K562 (cell line): ENCODE measurements at regions of chr7 and their contacts with region 1.

Region 1: DNA sequence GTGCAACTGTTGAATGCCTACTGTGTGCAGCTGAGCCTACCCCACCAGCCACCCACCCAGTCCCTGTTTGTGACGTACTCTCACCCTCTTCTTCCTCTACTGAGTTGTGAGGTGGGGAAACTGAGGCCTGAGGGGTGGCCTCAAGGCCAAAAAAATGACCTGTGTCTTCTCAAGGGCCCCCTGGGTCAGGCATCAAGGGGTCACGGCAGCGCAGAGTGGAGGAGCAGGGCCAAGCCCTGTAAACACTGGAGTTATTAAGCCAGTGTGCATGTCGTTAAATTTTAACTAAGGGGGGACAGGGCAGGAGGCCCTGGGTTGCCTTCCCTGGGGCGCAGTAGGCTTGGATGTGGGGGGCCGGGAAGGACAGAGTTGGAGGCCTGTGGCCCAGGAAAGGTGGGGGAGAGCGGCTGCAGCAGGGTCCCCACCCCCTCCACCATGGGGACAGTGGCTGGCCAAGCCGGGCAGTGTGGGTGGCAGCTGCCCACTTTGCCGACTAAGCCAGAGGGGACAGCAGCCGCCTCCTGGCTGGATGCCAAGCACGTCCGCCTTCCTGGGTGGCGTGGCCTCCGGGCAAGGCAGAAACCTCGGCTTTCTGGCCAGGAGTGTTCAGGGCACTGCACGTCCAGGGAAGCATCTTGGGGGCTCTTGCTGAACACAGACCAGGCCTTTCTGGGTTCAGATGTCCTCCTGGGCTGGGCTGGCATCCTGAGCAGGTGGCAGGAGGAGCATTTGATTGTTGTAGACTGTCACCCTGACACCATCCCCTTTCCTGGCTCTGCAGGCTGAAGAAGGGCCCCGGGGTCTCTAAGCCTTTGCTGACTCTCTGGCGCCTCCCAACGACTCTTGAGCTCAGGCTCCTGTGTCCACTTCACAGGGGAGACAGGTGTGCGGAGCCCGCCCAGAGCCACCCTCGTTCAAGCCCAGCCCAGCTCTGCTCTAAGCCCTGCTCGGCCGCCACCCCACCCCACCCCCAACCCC is 1.9 kb downstream of the SLC29A4 start:
- DNase-seq: peak; percentile 36 to 70 (median 48)
- ATAC-seq: peak; percentile 82
- H3K4me3 ChIP-seq: no peak overlapping the region
- H3K27ac ChIP-seq: no peak overlapping the region
- H3K4me1 ChIP-seq: peaks cover 0 to 22% of the 10 kb centered on the region in 2 experiments; a peak in 2 of 5 replicates
- H3K27me3 ChIP-seq: peaks cover under 1 to 9% of the 10 kb centered on the region in 2 experiments; a peak in 3 of 5 replicates
- CTCF ChIP-seq: peak; percentile 56 to 60 (median 56)
- EP300 ChIP-seq: no peak
- POLR2A ChIP-seq: no peak
- RAD21 ChIP-seq: peak in 1 of 2 experiments; percentile 38; a peak in 2 of 4 replicates

Region 2: DNA sequence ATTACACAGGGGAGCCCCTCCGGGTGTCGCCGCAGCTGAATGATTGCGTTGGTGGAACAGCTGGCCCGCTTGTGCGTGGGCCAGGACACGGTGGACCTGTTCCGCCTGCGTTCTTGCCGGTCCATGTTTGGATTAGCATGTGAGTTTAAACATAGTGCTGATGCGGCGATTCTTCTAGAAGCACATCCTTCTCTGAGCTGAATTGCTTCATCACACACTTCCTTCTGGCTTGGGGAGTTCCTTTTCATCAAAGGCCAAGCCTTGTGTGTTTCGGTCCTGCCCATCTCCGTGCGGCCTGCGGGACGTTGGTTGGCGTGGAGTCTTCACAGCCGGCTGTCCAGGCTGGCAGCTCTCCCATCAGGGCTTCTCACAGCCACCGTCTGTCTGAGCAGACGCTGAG is 47.3 kb before region 1 on chr7:
- CTCF ChIA-PET with region 1: interaction called, 4 read pairs
- POLR2A ChIA-PET with region 1: no interaction called
- in situ Hi-C with region 1: no loop called
- intact Hi-C with region 1: loop called (anchors 1 kb)
- DNase-seq: no peak
- ATAC-seq: no peak
- H3K4me3 ChIP-seq: no peak overlapping the region
- H3K27ac ChIP-seq: no peak overlapping the region
- H3K4me1 ChIP-seq: peaks cover 6 to 14% of the 10 kb centered on the region in 2 experiments; a peak in 3 of 5 replicates
- H3K27me3 ChIP-seq: peaks cover 0 to 5% of the 10 kb centered on the region in 2 experiments; a peak in 1 of 5 replicates
- CTCF ChIP-seq: no peak
- EP300 ChIP-seq: no peak
- POLR2A ChIP-seq: no peak
- RAD21 ChIP-seq: no peak